Caco-2 (cell line): ENCODE measurements at regions of chr14 and their contacts with region 1.

Region 1: GRCh38 chr14:79825046-79825521 is 386.2 kb downstream of the DIO2 start:
- DNase-seq: no peak
- H3K4me3 ChIP-seq: no peak overlapping the region
- H3K4me3 Mint-ChIP-seq: no peak overlapping the region
- H3K27ac Mint-ChIP-seq: no peak overlapping the region
- H3K4me1 ChIP-seq: no peaks in the 10 kb centered on the region
- H3K4me1 Mint-ChIP-seq: peaks cover 16% of the 10 kb centered on the region
- H3K27me3 ChIP-seq: no peaks in the 10 kb centered on the region
- H3K27me3 Mint-ChIP-seq: no peaks in the 10 kb centered on the region
- CTCF ChIP-seq: no peak

Region 2: DNA sequence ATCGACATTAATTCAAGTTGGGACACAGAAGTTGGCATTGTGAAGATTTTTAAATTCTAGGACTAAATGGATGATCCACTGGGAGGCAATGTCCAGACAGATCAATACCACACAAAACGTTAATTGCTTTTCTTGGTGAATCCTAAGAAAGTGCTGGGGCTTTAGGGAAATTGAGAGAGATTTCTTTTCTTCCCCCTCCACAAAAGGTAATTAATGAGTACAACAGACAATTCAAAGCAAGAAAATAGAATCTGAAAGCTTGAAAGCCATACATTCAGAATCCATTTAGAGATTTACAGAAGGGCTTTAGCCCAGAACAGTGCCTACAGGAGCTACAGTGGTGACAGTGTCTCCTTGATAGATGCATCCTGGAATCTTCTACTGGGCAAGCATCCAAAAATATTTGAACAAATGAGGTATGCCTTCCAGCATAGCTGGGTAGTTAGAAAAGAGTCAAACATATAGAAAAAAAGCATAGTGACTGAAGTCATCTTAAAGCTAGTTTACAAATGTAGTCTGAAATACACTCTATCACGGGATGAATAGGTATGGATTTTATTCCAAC is 331.9 kb before region 1 on chr14:
- CTCF ChIA-PET with region 1: no interaction called
- POLR2A ChIA-PET with region 1: no interaction called
- intact Hi-C with region 1: no loop called
- DNase-seq: no peak
- H3K4me3 ChIP-seq: no peak overlapping the region
- H3K4me3 Mint-ChIP-seq: no peak overlapping the region
- H3K27ac Mint-ChIP-seq: no peak overlapping the region
- H3K4me1 ChIP-seq: peaks cover 5% of the 10 kb centered on the region; the same call in 1 of the 2 replicates
- H3K4me1 Mint-ChIP-seq: peaks cover 5% of the 10 kb centered on the region
- H3K27me3 ChIP-seq: no peaks in the 10 kb centered on the region
- H3K27me3 Mint-ChIP-seq: no peaks in the 10 kb centered on the region
- CTCF ChIP-seq: no peak

Region 3: DNA sequence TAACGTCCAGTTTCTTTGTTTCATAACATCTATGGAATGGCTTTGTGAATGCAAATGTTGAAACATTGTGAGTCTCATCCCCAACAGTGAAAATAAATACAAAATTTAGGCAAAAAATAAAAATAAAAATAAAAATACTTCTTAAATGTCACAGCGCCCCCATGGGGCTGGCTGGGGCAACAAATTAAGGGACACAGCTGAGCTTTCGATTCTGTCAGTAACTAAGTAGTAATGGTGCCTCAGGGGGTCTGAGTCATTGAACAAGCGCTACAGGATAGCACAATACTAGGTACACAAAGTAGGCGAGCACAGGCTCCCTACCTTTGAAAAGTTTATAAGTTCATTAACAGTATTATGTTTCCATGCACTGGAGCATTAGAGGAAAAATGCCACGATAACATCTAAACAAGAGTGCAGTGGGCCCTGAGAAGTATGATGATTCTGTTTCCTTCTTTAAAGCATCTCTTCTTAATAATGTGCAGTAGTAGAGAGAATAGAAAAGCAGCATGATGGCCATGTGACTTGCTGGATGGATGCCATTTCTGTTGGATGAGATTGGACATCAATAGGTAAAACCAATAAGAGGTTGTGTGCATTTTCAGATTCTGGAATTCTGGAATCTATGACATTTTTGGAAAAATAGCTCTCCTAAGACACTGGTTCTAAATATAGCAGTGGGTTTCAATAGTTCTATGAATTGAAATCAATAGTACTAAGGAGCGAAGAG is 280.9 kb before region 1 on chr14:
- CTCF ChIA-PET with region 1: no interaction called
- POLR2A ChIA-PET with region 1: no interaction called
- intact Hi-C with region 1: no loop called
- DNase-seq: no peak
- H3K4me3 ChIP-seq: no peak overlapping the region
- H3K4me3 Mint-ChIP-seq: no peak overlapping the region
- H3K27ac Mint-ChIP-seq: no peak overlapping the region
- H3K4me1 ChIP-seq: peaks cover 37% of the 10 kb centered on the region
- H3K4me1 Mint-ChIP-seq: peaks cover 45% of the 10 kb centered on the region
- H3K27me3 ChIP-seq: no peaks in the 10 kb centered on the region
- H3K27me3 Mint-ChIP-seq: no peaks in the 10 kb centered on the region
- CTCF ChIP-seq: peak in 1 of 2 experiments; percentile 48

Region 4: GRCh38 chr14:79638672-79639266 is 186.3 kb before region 1 on chr14:
- CTCF ChIA-PET with region 1: no interaction called
- POLR2A ChIA-PET with region 1: no interaction called
- intact Hi-C with region 1: no loop called
- DNase-seq: no peak
- H3K4me3 ChIP-seq: no peak overlapping the region
- H3K4me3 Mint-ChIP-seq: no peak overlapping the region
- H3K27ac Mint-ChIP-seq: peak overlapping the region; percentile 53
- H3K4me1 ChIP-seq: no peaks in the 10 kb centered on the region
- H3K4me1 Mint-ChIP-seq: peaks cover 9% of the 10 kb centered on the region
- H3K27me3 ChIP-seq: no peaks in the 10 kb centered on the region
- H3K27me3 Mint-ChIP-seq: no peaks in the 10 kb centered on the region
- CTCF ChIP-seq: no peak

Region 5: DNA sequence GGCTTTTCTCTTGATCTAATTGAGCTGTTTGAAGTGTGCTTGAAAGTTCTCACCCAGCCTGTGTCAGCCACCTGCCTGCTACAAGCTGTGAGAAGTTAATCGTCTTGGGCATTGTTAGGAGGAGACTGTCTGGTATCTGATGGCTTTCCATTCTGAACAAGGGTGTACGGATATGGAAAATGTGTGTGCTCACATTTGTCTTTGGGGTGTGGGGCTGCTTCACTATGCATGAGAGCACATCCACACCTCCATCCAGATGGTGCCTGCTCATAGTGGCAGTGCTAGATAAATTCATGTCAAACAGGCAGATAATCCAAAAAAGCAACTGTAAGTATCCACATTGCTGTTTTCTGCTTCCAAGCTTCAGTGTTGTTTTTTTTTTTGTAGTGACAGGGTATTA is 76.0 kb before region 1 on chr14:
- CTCF ChIA-PET with region 1: no interaction called
- POLR2A ChIA-PET with region 1: no interaction called
- intact Hi-C with region 1: no loop called
- DNase-seq: no peak
- H3K4me3 ChIP-seq: no peak overlapping the region
- H3K4me3 Mint-ChIP-seq: no peak overlapping the region
- H3K27ac Mint-ChIP-seq: no peak overlapping the region
- H3K4me1 ChIP-seq: no peaks in the 10 kb centered on the region
- H3K4me1 Mint-ChIP-seq: no peaks in the 10 kb centered on the region
- H3K27me3 ChIP-seq: no peaks in the 10 kb centered on the region
- H3K27me3 Mint-ChIP-seq: no peaks in the 10 kb centered on the region
- CTCF ChIP-seq: no peak

Region 6: DNA sequence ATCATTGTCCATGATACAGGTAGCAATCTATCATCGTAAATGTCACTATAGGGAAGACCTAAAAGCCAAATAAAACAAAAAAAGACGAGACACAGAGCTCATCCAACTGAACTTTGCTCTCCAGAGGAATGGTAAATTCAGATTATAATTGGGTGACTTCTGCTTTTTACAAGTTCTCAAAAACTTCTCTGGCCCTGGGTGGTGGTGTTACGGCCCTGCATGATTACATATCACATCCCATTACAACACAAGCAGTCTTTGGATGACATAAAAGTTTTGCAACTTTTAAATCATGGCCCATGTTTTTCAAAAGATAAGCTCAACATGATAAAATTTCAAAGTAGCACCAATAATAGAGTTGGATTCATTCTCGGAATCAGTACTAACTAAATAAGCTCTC is 86.7 kb after region 1 on chr14:
- CTCF ChIA-PET with region 1: no interaction called
- POLR2A ChIA-PET with region 1: interaction called, 12 read pairs
- intact Hi-C with region 1: no loop called
- DNase-seq: peak; percentile 28 to 46
- H3K4me3 ChIP-seq: no peak overlapping the region
- H3K4me3 Mint-ChIP-seq: no peak overlapping the region
- H3K27ac Mint-ChIP-seq: no peak overlapping the region
- H3K4me1 ChIP-seq: peaks cover 14% of the 10 kb centered on the region
- H3K4me1 Mint-ChIP-seq: peaks cover 8% of the 10 kb centered on the region
- H3K27me3 ChIP-seq: no peaks in the 10 kb centered on the region
- H3K27me3 Mint-ChIP-seq: no peaks in the 10 kb centered on the region
- CTCF ChIP-seq: no peak